ENCODE measurements at regions of chr9 and their contacts with region 1.

Region 1: GRCh38 chr9:37913480-37914153 is 9.7 kb upstream of the SLC25A51 start:
- DNase-seq: peak; percentile 87 to 95
- H3K4me3 ChIP-seq: no peak overlapping the region
- CTCF ChIP-seq: peak in 2 of 3 donors; percentile 18 to 66
- POLR2A ChIP-seq: no peak

Region 2: DNA sequence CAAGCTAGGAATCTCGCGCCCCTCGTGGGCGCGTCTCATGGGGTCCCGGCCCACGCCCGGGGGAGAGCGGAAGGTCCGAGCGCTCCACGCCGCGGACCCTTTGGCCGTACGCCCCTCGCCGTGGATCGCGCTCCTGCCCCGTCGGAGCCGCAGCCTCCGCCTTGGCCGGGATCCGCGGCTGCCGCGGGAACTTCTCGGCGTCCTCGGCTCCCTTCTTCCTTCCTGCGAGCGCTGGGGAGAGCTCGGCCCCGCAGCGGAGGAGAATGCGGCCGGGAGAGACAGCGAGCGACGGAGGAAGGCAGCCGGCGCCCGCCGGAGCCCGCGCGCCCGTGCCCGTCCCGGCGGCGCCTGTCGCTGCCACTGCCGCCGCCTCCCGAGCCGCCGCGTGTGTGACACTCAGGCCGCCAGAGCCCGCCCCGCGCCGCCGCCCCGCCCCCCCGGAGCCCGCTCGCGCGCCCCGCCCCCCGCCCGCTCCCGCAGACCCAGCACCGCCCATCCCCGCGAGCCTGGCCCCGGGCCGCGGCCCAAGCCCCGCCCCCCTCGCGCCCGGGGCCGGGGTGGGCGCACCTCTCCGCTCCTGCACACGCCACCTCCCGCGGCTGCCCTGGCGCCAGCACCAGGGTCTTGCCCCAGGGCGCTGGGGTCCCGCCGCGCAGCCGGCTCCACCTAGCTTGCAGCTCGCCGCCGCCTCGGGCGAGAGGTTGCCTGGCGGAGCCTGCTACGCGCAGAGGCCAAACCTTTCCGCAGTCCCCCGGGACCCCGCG is 155.4 kb after region 1 on chr9 and contains the start of gene SHB:
- intact Hi-C with region 1: loop called (anchors 10 kb)
- DNase-seq: peak; percentile 50 to 96
- H3K4me3 ChIP-seq: peak within 1 kb of the TSS; percentile 69
- CTCF ChIP-seq: no peak
- POLR2A ChIP-seq: no peak
- total RNA-seq, gene SHB: 27.6 to 42.6 (median 34.5) TPM

Region 3: DNA sequence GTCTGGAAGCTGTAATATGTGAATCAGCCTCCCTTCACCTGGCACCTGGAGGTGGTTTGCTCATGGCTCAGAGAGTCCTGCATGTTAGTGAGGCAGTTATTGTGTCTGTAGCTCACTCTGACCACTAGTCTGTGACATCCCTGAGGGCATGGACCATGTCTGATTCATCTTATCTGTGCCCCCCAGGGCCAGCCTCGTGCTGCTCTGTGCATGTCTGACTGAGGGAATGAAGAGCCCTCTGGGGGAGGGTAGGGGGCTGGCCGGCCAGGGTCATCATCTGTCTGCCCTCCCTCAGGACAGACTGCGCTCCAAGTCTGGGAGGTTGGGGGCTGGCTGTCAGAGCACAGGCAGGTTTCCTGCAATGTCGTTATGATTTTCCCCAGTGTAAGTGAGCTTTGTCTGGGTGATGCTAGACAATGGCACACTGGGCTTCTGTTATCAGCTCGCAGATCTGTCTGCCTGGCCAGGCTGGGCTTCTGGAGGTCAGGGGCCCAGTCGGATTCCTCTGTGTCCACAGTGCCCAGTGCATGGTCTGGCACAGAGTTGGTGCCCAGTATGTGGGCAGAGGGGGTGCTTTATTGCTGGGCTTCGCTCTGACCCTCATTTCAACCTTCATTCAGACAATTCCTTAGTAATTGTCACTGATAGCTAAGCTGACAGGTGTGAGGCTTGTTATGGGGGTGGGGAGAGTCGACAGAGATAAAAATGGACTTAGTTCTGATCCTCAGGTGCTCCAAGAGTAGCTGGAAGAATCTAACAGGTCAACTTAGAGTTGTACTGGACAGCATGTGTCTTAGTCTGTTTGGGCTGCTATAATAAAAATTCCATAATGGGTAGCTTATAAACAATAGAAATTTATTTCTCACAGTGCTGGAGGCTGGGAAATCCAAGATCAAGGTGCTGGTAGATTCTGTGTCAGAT is 241.1 kb after region 1 on chr9:
- intact Hi-C with region 1: loop called (anchors 10 kb)
- DNase-seq: peak in 1 of 2 donors; percentile 65
- H3K4me3 ChIP-seq: no peak overlapping the region
- CTCF ChIP-seq: no peak
- POLR2A ChIP-seq: no peak

Region 4: GRCh38 chr9:38362852-38363593 is 449.4 kb after region 1 on chr9:
- intact Hi-C with region 1: loop called (anchors 10 kb)
- DNase-seq: peak in 1 of 2 donors; percentile 83
- H3K4me3 ChIP-seq: no peak overlapping the region
- CTCF ChIP-seq: no peak
- POLR2A ChIP-seq: no peak

Measured in lower leg skin (tissue), 4 donors.